AG04449 (cell line): ENCODE measurements at regions of chr4 and their contacts with region 1.

Region 1: DNA sequence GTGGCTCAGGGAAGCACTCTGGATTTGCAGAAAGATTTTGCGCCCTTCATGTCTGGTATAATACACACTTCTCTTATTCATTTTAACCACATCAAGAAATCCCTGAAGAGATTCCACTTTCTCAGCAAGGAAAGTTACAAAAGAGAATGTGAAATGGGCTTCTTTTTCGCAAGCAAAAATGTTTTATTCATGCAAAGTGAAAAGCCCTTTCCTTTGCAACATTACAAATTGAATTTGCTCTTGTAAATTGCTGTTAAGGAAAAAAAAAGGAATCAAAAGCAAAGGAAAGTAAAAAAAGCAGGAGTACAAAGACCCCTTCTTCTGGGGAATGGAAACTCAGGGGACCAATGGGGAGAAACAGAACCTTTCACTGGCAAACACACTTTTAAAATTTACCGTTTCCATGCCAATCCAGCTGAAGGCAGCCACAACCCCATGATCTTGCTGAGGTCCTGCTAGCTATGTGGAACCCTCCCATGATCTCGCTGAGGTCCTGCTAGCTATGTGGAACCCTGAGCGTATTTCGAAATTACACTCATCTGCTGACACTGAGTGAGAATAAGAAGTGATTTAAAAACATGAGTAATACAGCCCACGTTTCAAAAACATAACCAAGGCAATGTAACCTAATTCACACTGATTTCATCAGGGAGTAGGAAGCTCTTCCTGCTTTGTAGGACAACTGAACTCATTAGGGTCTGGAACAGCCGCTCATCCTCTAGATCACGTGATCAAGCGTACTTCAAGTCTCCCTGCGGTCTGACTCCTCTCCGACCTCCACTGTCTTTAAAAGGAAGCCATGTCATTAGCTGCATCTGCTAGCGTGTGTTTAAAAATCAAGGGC is 137.8 kb downstream of the NSUN7 start:
- DNase-seq: peak; percentile 80
- H3K4me3 ChIP-seq: no peak overlapping the region
- CTCF ChIP-seq: no peak

Region 2: DNA sequence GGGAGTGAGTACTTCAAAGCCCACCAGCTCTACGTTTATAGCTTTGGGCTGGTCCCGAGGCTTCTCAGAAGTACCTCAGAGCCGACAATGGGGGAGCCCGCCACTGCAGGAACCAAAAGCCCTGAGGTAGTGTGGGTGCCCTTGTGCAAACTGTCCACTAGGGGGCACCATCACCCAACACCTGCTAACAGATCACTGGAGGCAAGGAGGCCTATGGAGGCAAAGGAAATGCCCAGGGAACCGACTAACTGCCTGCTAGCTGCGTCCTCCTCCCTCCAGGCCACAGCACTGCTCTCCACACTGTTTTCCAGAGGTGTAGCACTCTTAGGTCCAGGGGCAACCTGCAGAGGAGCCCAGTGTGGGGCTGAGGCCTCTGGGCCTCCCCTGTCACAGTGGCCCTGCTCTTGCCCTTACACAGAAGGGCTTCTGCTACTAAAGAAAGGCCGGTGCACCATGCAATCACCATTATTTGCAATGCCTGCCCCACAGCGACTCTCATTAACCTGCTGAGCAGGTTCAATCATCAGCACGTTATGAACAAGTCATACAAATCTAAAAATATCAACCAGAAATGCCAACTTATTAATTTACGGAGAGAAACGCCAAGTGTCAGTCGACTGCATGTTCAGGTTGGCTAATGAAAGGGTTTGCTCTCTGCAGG is 21.3 kb after region 1 on chr4:
- CTCF ChIA-PET with region 1: interaction called, 10 read pairs
- POLR2A ChIA-PET with region 1: no interaction called
- DNase-seq: peak; percentile 7
- H3K4me3 ChIP-seq: no peak overlapping the region
- CTCF ChIP-seq: peak; percentile 87

Region 3: DNA sequence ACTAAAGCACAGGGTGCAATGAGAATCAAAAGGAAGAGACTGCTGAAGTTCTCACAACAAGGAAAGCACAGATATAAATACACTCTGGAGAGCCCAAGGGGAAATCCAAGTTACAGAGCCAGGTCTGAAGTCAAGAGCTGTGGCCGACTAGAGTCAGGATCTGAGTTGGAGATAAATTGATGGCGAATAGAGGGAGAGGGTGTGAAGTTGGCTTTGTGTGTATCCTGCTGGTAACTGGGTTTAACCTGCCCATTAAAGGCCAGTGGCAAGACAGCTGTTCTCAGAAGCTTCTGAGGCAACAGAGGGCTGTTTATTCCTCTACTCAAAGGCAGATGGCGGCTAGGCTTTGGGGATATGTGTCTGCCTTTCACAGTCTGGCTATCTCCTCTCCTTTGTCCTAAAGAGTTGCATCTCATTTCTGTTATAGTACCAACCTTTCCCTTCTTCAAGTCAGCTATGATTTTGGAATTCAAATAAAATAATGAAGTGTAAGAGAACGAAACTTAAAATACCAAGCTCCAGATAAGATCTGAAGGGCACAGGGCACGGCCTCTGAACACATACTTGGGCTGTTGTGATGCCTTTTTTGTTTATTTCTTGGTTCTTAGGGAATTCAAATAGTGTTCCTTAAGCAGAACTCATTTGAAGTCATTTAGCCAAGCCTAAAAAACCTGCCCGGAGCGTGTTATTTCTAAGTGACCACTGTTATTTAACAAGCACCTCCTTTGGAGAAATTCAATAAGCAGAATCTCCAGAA is 184.7 kb after region 1 on chr4:
- CTCF ChIA-PET with region 1: no interaction called
- POLR2A ChIA-PET with region 1: no interaction called
- DNase-seq: no peak
- H3K4me3 ChIP-seq: no peak overlapping the region
- CTCF ChIP-seq: no peak